ENCODE measurements at regions of chr1 and their contacts with region 1.

Region 1: DNA sequence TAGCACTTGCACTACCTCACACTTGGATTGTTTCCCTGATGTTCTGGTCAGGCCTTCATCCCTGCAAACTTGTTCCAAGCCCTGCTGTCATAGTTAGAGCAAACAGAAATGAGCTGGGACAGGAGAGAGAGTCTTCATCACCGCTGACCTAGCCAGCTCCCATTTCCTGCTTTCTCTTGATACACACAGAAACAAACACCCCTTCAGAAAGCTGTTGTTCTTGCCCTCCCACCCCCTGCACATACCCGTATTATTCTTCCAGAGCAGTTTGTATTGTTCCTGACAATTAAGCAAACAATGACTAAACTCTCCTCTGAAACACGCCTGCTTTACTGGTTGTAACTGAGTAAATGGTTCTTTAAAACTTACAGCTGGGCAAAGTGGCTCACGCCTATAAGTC is 2.9 kb upstream of the SYT2 start:
- DNase-seq: peak; percentile 40 to 75
- H3K4me3 ChIP-seq: no peak overlapping the region
- H3K27ac ChIP-seq: no peak overlapping the region
- H3K4me1 ChIP-seq: peaks cover 6% of the 10 kb centered on the region; the same call in 1 of the 2 replicates
- H3K27me3 ChIP-seq: peaks cover 46% of the 10 kb centered on the region
- CTCF ChIP-seq: no peak

Region 2: GRCh38 chr1:201739492-201740085 is 973.5 kb before region 1 on chr1:
- CTCF ChIA-PET with region 1: no interaction called
- POLR2A ChIA-PET with region 1: no interaction called
- intact Hi-C with region 1: no loop called
- DNase-seq: peak; percentile 65 to 79
- H3K4me3 ChIP-seq: peak overlapping the region; percentile 68
- H3K27ac ChIP-seq: no peak overlapping the region
- H3K4me1 ChIP-seq: peaks cover 23% of the 10 kb centered on the region
- H3K27me3 ChIP-seq: no peaks in the 10 kb centered on the region
- CTCF ChIP-seq: no peak

Region 3: GRCh38 chr1:202501281-202501680 is 211.8 kb before region 1 on chr1:
- CTCF ChIA-PET with region 1: no interaction called
- POLR2A ChIA-PET with region 1: no interaction called
- intact Hi-C with region 1: loop called (anchors 2 kb)
- DNase-seq: peak in 1 of 2 experiments; percentile 3
- H3K4me3 ChIP-seq: no peak overlapping the region
- H3K27ac ChIP-seq: no peak overlapping the region
- H3K4me1 ChIP-seq: no peaks in the 10 kb centered on the region
- H3K27me3 ChIP-seq: no peaks in the 10 kb centered on the region
- CTCF ChIP-seq: peak; percentile 68